ENCODE measurements at regions of chr7 and their contacts with region 1.

Region 1: GRCh38 chr7:32154797-32155196 is 84.6 kb upstream of the PDE1C start:
- DNase-seq: peak; percentile 67 to 88 (median 87)
- ATAC-seq: peak; percentile 88 to 90
- H3K4me3 ChIP-seq: no peak overlapping the region
- H3K27ac ChIP-seq: peak overlapping the region; percentile 60
- H3K4me1 ChIP-seq: peaks cover 3% of the 10 kb centered on the region
- H3K27me3 ChIP-seq: no peaks in the 10 kb centered on the region

Region 2: DNA sequence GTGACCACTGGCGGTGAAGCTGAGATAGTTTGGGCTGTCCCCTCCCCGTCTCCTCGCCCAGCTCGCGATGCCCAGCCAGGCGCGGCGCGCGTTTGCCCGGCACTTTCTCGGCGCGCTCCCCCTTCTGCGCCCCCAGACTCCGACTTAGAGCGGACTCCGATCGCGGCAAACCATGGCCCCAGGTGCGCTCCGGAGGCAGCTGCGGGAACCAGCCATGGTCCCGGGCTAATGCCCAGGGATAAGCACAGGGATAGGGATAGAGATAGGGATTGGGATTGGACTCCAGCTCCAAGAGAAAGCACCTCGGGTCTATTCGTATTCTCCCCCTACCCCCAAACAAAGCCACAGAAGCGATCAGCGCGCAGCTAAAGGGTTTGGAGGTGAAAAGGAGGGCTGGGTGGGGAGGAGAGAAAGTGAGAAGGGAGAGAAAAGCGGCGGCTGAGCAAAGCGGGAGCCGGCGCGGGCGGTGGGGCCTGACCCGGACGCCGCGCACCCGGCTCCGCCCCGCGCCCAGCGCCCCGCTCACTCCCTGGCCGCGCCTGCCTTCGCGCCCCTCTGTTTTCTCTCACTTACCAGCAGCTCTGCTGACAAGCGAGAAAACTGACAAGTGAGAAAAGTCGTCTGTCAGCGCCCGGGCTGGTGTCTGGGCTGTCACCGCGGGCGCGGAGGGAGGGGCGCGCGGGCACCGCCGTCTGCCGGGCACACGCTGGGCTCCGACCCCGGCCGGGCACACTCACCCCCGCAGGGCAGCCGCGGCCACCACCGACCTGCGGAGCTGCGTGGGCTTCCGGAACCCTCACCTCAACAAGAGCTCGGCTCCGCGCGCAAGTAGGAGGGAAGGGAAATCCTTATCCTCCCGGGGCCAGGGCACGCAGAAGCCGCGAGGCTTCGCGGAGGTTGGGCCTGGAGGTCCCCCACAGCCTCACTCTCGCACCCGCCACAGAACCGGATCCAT is 84.1 kb before region 1 on chr7 and contains the start of gene PDE1C:
- intact Hi-C with region 1: loop called in 3 of 4 experiments (anchors 10 kb)
- DNase-seq: peak; percentile 56 to 87 (median 81)
- ATAC-seq: peak; percentile 86 to 92
- H3K4me3 ChIP-seq: peak within 1 kb of the TSS; percentile 93
- H3K27ac ChIP-seq: peak within 1 kb of the TSS; percentile 98
- H3K4me1 ChIP-seq: peaks cover 4% of the 10 kb centered on the region
- H3K27me3 ChIP-seq: no peaks in the 10 kb centered on the region
- total RNA-seq, gene PDE1C: 89.8 to 94.4 (median 91.7) TPM

Region 3: GRCh38 chr7:32191305-32191704 is 36.5 kb after region 1 on chr7:
- intact Hi-C with region 1: no loop called
- DNase-seq: no peak
- ATAC-seq: no peak
- H3K4me3 ChIP-seq: no peak overlapping the region
- H3K27ac ChIP-seq: no peak overlapping the region
- H3K4me1 ChIP-seq: no peaks in the 10 kb centered on the region
- H3K27me3 ChIP-seq: no peaks in the 10 kb centered on the region

Measured in right cardiac atrium (tissue), 5 donors.